GM10248 (cell line): ENCODE measurements at regions of chr12 and their contacts with region 1.

Region 1: GRCh38 chr12:15751741-15752140 is 37.4 kb downstream of the EPS8 start:
- DNase-seq: no peak
- CTCF ChIP-seq: no peak

Region 2: GRCh38 chr12:15733136-15733535 is 18.6 kb before region 1 on chr12:
- CTCF ChIA-PET with region 1: interaction called, 10 read pairs
- POLR2A ChIA-PET with region 1: no interaction called
- DNase-seq: no peak
- CTCF ChIP-seq: no peak

Region 3: DNA sequence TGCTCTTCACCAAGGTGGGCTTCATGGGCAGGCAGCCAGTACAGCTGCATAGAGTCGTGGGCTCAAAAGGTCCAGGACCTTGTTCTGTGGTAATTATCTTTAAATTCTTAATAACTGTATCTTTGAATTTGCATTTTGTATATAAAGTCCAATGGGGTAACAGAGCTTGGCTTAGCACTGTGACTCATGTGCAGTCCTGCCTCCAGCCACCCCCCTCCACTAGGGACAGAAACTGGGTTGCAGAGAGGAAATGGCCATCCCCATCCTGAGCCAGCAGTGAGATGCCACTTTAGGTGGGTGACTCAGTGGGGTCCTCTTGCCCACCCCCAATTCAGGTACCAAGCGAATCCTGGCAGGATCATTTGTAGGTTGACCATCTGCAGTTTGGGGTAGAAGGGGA is 10.7 kb before region 1 on chr12:
- CTCF ChIA-PET with region 1: interaction called, 10 read pairs
- POLR2A ChIA-PET with region 1: no interaction called
- DNase-seq: no peak
- CTCF ChIP-seq: no peak

Region 4: GRCh38 chr12:15808652-15809051 is 56.9 kb after region 1 on chr12:
- CTCF ChIA-PET with region 1: no interaction called
- POLR2A ChIA-PET with region 1: no interaction called
- DNase-seq: no peak
- CTCF ChIP-seq: no peak

Region 5: DNA sequence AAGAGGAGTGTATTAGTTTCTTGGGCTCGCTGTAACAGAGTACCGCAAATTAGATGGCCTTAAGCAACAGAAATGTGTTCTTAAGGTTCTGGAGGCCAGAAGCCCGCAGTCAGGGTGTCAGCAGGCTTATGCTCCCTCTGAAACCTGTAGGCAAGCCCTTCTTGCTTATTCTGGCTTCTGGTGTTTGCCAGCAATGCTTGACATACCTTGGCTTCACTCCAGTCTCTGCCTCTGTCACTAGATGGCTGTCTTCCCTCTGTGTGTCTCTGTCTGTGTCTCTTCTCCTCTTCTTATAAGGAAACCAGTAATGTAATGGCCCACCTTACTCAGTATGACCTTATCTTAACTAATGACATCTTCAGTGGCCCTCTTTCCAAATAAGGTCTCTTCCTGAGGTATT is 244.5 kb after region 1 on chr12:
- CTCF ChIA-PET with region 1: no interaction called
- POLR2A ChIA-PET with region 1: no interaction called
- DNase-seq: no peak
- CTCF ChIP-seq: no peak